Heart left ventricle (tissue), 16 donors: ENCODE measurements at regions of chr5 and their contacts with region 1.

Region 1: DNA sequence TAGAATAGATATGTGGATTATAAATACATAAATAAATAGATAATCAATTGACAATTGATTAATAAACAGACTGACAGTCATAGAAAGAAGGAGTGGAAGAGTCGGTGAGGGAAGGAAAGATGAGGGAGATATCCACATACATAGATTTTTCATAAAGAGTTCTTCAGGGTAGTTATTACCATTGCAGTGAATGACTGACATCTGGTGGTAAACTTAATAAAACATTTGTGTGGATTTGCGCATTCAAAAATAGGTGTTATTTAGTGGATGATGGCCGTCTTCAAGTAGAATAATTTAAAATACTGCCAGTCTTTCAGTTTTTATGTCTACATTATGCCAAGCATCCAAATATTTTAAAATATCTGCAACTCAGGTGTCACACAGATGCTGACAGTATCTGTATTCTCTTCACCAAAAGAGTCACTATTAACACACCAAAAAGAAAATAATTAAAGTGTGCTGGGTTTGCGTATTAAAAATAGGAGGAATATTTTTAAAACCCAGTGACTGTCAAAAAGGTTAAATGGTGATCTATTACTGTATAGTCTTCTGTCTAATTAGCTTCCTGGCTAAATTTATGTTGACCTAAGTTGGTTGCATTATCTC is 78.8 kb downstream of the GIN1 start:
- DNase-seq: no peak
- ATAC-seq: no peak
- H3K4me3 ChIP-seq: no peak overlapping the region
- H3K27ac ChIP-seq: no peak overlapping the region
- H3K4me1 ChIP-seq: no peaks in the 10 kb centered on the region
- H3K27me3 ChIP-seq: no peaks in the 10 kb centered on the region
- CTCF ChIP-seq: peak; percentile 41 to 81 (median 62)
- POLR2A ChIP-seq: no peak

Region 2: DNA sequence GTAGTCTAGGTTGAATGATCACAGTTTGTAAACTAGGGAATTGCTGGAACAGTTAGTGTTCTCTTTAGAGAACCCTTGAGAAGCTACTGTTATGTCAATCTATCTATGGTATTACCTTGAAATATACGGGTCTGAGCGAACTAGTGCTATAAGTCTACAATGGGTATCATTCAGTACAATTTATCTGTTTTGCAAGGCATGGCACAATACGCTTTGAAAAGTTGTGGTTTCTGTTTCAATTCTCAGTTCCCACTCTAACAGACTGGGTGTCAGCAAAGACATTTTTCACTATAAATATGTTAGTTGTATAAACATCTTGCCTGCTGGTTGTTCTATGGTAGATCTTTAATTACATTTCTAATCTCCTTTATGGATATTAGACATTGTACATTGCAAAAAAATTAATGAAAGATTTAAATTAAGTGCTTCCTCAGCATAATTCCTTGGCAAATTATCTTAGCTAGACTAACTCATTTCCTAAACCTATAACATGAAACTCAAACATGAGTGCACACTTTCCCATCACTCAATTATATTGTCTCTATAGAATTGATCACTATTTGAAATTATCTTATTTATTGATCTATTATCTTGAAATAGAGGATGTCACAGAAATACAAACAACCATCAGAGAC is 517.5 kb before region 1 on chr5:
- intact Hi-C with region 1: no loop called
- DNase-seq: no peak
- ATAC-seq: no peak
- H3K4me3 ChIP-seq: no peak overlapping the region
- H3K27ac ChIP-seq: no peak overlapping the region
- H3K4me1 ChIP-seq: peaks cover 0 to 10% (median 2%) of the 10 kb centered on the region in 12 donors
- H3K27me3 ChIP-seq: no peaks in the 10 kb centered on the region
- CTCF ChIP-seq: no peak
- POLR2A ChIP-seq: no peak

Region 3: GRCh38 chr5:102536323-102536928 is 504.7 kb before region 1 on chr5:
- intact Hi-C with region 1: loop called in 1 of 10 experiments (anchors 5 kb)
- DNase-seq: no peak
- ATAC-seq: no peak
- H3K4me3 ChIP-seq: no peak overlapping the region
- H3K27ac ChIP-seq: no peak overlapping the region
- H3K4me1 ChIP-seq: peaks cover 0 to 23% (median 0%) of the 10 kb centered on the region in 12 donors
- H3K27me3 ChIP-seq: no peaks in the 10 kb centered on the region
- CTCF ChIP-seq: peak in 11 of 12 donors; percentile 15 to 55 (median 33)
- POLR2A ChIP-seq: no peak

Region 4: DNA sequence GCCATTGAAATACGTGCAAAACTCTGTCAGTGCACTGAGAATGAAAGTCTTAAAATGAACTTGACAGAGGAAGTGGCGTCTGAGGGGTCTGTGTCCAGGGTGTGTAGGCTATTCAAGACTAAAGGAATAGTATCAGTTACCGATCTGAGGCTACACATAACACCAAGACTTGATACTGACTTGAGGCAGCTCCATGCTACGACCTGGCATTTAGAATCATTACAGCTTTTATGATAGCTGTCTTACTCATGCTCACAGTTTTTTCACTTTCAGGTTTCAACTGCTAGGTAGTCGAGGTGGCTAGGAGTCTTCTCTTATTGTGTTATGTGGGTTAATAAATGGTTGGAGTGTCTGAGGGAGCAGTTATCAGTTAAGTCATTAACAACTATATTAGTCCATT is 449.5 kb before region 1 on chr5:
- intact Hi-C with region 1: loop called in 1 of 10 experiments (anchors 2 kb)
- DNase-seq: no peak
- ATAC-seq: no peak
- H3K4me3 ChIP-seq: no peak overlapping the region
- H3K27ac ChIP-seq: no peak overlapping the region
- H3K4me1 ChIP-seq: no peaks in the 10 kb centered on the region
- H3K27me3 ChIP-seq: no peaks in the 10 kb centered on the region
- CTCF ChIP-seq: no peak
- POLR2A ChIP-seq: no peak

Region 5: GRCh38 chr5:102681407-102681983 is 359.7 kb before region 1 on chr5:
- intact Hi-C with region 1: loop called in 9 of 10 experiments (anchors 2 to 5 kb)
- DNase-seq: peak; percentile 62 to 75 (median 71)
- ATAC-seq: peak in 3 of 4 donors; percentile 84 to 88 (median 87)
- H3K4me3 ChIP-seq: no peak overlapping the region
- H3K27ac ChIP-seq: no peak overlapping the region
- H3K4me1 ChIP-seq: no peaks in the 10 kb centered on the region
- H3K27me3 ChIP-seq: no peaks in the 10 kb centered on the region
- CTCF ChIP-seq: peak; percentile 59 to 91 (median 82)
- POLR2A ChIP-seq: no peak

Region 6: GRCh38 chr5:102971697-102972293 is 69.4 kb before region 1 on chr5:
- intact Hi-C with region 1: no loop called
- DNase-seq: no peak
- ATAC-seq: peak in 2 of 4 donors; percentile 52 to 53
- H3K4me3 ChIP-seq: no peak overlapping the region
- H3K27ac ChIP-seq: no peak overlapping the region
- H3K4me1 ChIP-seq: peaks cover 0 to 16% (median 5%) of the 10 kb centered on the region in 12 donors
- H3K27me3 ChIP-seq: no peaks in the 10 kb centered on the region
- CTCF ChIP-seq: peak in 11 of 12 donors; percentile 27 to 62 (median 46)
- POLR2A ChIP-seq: no peak

Region 7: GRCh38 chr5:103139264-103139865 is 98.2 kb after region 1 on chr5:
- intact Hi-C with region 1: loop called in 2 of 10 experiments (anchors 1 to 10 kb)
- DNase-seq: peak in 4 of 5 donors; percentile 54 to 76 (median 72)
- ATAC-seq: peak; percentile 71 to 90 (median 87)
- H3K4me3 ChIP-seq: no peak overlapping the region
- H3K27ac ChIP-seq: no peak overlapping the region
- H3K4me1 ChIP-seq: no peaks in the 10 kb centered on the region
- H3K27me3 ChIP-seq: no peaks in the 10 kb centered on the region
- CTCF ChIP-seq: peak; percentile 76 to 95 (median 90)
- POLR2A ChIP-seq: no peak